ENCODE measurements at regions of chr9 and their contacts with region 1.

Region 1: DNA sequence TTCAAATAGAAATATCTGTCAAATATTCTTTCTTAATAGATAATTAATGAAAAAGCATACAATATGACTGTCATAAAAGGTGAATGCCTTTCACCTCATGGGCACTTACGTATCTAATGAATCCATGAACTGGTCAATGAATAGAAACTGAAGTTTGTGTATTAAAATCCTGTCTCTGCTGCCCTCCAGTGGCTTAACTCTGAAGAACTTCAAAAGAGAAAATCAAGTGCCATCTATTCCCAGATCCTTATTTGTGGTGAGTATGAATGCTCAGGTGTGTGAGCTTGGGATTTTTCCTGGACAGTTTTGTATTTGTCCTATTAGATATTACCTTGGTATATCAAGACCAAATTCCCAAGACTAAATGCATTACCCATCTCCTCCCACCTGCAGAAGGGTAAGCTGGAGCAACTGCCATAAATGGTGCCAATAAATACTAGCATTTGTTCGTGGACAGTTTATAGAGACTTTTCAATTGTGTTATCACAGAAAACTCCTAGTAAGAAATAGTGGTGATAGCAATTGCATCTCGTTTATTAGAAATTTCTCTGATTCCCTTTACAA is 44.0 kb upstream of the SVEP1 start:
- DNase-seq: peak in 1 of 3 donors; percentile 83
- ATAC-seq: peak; percentile 68
- H3K4me3 ChIP-seq: no peak overlapping the region
- H3K4me1 ChIP-seq: no peaks in the 10 kb centered on the region
- CTCF ChIP-seq: no peak

Region 2: DNA sequence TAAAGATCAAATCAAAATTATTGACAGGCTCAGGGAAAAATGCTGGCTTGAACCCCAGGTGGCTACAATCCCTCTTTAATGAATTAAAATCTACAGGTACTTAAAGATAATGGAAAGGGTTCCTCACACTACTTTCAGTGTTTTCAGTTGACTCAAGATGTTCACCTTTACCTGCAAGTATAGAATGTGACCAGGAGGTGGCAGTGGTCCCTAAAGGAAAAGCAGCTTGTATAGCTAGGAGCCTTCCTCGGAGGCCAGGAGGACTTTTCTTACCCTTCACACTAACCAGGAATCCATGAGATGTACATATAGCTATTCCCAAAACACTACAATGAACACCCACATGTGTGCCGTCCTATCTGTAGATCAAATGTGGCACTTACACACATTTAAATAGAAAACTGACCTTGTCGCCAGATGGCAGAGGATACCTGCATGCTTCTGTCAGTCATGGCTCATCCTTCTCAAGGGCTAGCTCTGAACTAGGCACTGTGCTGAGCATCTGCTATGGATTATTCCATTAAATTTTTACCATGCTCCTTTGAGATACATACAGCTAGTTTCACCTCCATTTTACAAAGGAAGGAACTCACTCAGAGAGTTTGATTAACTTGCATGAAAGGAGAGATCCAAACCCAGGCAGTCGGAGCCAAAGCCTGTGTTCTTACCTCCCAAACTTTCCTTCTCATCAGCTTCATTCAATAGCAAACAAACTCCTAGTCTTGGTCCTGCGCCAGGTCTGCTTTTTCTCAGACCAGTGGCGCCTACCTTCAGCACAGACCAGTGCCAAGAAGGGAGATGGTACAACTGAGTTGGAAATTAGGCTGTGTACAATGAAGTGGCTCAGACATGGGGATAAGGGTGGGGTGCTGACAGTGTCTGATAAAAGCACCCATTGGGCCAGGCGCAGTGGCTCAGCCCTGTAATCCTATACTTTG is 440.1 kb before region 1 on chr9:
- intact Hi-C with region 1: loop called in 1 of 2 experiments (anchors 10 kb)
- DNase-seq: peak in 1 of 3 donors; percentile 83
- ATAC-seq: peak; percentile 82
- H3K4me3 ChIP-seq: no peak overlapping the region
- H3K4me1 ChIP-seq: peaks cover 6% of the 10 kb centered on the region
- CTCF ChIP-seq: peak; percentile 45

Region 3: DNA sequence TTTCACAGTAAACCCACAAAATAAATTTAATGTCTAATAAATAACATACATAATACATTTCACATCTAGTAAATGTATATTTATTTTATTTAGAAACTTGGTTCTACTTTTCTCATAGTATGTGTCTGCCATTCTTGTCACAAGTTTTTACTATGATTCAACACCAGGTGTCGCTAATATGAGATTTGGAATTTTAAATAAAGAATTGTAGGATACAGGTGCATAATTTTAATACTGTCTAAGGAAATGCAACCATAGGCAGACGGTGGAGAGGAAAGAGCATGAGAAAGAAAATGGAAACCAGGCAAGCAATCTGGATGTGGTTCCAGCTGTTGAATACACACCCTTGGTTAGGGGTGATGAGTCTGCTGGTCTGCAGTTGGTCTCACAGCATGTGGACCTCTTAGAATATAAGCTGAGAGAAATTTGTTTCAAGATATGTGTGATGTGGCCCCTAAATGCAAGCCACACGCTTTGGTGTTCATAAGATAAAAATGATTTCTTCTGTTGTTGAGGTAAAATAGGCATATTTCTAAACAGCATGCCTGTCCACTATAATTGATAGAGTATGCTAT is 171.2 kb before region 1 on chr9:
- intact Hi-C with region 1: loop called in 1 of 2 experiments (anchors 10 kb)
- DNase-seq: no peak
- ATAC-seq: no peak
- H3K4me3 ChIP-seq: no peak overlapping the region
- H3K4me1 ChIP-seq: no peaks in the 10 kb centered on the region
- CTCF ChIP-seq: no peak

Region 4: DNA sequence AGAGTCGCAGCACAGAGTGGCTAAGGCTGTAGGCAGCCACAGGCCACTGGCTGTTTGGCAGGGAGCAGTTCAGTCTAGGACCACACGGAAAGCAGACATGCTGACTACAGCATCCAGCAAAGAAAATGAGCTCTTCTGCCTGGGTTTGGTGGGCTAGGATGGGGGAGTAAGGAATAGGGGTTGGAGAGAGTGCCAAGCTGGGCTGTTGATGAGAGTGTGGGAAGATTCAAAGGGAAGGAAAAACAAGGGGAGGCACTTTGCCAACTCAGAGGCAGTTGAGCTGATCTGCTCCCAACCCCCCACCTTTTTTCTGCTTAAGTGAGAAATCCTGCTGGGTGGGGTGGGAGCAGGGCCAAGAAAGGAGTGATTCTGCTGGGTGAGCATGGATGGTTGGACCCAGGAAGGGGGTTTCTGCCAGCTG is 79.9 kb before region 1 on chr9:
- intact Hi-C with region 1: no loop called
- DNase-seq: no peak
- ATAC-seq: no peak
- H3K4me3 ChIP-seq: no peak overlapping the region
- H3K4me1 ChIP-seq: no peaks in the 10 kb centered on the region
- CTCF ChIP-seq: no peak